Left colon (tissue), 2 donors: ENCODE measurements at regions of chr4 and their contacts with region 1.

Region 1: DNA sequence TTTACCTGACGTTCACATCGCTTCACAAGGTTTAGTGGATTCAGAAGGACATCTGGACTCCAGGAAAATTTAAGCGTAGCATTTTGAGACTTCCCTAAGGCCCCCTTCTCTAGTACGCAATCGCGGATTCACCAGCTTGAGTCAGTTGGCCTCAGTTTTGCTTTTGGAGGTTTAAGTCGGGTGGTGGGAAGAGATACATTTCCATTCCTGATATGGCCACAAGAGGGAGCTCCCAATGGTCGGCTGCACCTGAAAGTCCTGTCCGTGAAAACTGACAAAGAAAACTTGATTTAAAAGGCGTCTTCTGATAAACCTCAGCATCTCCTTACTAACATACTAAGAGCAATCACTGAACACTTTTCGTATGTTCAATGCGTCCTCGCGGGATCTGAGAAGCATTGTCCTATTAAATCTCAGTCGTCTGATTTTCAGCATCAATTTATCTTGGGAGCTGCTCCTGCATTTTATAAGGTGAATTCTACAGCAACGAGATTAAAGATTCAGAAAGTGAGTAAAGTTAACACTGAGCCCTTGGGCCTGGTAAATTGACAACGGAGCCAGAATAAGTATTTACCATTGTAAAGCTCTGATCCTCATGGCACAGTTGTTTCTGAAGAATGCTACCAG is 50.6 kb downstream of the LGI2 start:
- DNase-seq: peak; percentile 34 to 44
- ATAC-seq: peak; percentile 69

Region 2: GRCh38 chr4:25144870-25145481 is 164.8 kb after region 1 on chr4:
- intact Hi-C with region 1: loop called in 1 of 2 experiments (anchors 10 kb)
- DNase-seq: no peak
- ATAC-seq: no peak

Region 3: DNA sequence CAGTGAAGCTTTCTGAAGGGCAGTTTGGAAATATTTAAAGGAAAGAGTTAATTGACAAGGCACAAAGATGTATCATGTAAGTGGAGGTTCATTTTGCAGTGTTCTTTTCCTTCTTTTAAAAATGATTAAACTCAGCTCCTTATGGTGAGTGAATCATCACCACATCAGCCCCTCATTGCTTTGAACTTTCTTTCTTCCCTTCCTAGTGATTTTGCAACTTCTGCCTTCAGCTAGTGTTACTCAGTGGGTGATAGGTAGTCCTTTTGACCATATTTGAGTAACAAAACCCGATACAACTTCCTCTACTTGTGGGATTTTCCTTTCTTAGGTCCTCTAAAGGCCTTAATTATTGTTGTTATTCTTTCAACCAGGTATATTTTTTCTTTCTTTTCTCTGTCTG is 340.6 kb after region 1 on chr4:
- intact Hi-C with region 1: no loop called
- DNase-seq: no peak
- ATAC-seq: no peak

Region 4: DNA sequence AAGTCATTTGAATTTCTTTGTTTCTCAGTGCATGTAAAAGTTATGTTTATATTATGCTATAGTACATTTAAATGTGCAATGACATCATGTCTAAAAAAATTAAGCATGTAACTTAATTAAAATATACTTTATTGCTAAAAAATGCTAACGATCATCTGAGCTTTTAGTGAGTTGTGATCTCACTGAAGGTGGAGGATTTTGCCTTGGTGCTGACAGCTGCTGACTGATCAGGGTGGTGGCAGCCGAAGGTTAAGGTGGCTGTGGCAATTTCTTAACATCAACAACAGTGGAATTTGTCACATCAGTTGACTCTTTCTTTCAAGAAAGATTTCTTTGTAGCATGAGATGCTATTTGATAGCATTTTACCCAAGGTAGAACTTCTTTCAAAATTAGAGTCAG is 403.5 kb after region 1 on chr4:
- intact Hi-C with region 1: no loop called
- DNase-seq: no peak
- ATAC-seq: no peak